Breast epithelium (tissue), 4 donors: ENCODE measurements at regions of chr3 and their contacts with region 1.

Region 1: GRCh38 chr3:13828501-13829245 is 51.2 kb downstream of the WNT7A start:
- DNase-seq: no peak
- H3K4me3 ChIP-seq: no peak overlapping the region
- H3K27ac ChIP-seq: no peak overlapping the region
- H3K4me1 ChIP-seq: no peaks in the 10 kb centered on the region
- H3K27me3 ChIP-seq: no peaks in the 10 kb centered on the region
- CTCF ChIP-seq: no peak
- POLR2A ChIP-seq: no peak

Region 2: GRCh38 chr3:13812034-13812471 is 16.6 kb before region 1 on chr3:
- intact Hi-C with region 1: loop called (anchors 1 kb)
- DNase-seq: no peak
- H3K4me3 ChIP-seq: no peak overlapping the region
- H3K27ac ChIP-seq: no peak overlapping the region
- H3K4me1 ChIP-seq: no peaks in the 10 kb centered on the region
- H3K27me3 ChIP-seq: no peaks in the 10 kb centered on the region
- CTCF ChIP-seq: no peak
- POLR2A ChIP-seq: no peak